ENCODE measurements at regions of chr15 and their contacts with region 1.

Region 1: DNA sequence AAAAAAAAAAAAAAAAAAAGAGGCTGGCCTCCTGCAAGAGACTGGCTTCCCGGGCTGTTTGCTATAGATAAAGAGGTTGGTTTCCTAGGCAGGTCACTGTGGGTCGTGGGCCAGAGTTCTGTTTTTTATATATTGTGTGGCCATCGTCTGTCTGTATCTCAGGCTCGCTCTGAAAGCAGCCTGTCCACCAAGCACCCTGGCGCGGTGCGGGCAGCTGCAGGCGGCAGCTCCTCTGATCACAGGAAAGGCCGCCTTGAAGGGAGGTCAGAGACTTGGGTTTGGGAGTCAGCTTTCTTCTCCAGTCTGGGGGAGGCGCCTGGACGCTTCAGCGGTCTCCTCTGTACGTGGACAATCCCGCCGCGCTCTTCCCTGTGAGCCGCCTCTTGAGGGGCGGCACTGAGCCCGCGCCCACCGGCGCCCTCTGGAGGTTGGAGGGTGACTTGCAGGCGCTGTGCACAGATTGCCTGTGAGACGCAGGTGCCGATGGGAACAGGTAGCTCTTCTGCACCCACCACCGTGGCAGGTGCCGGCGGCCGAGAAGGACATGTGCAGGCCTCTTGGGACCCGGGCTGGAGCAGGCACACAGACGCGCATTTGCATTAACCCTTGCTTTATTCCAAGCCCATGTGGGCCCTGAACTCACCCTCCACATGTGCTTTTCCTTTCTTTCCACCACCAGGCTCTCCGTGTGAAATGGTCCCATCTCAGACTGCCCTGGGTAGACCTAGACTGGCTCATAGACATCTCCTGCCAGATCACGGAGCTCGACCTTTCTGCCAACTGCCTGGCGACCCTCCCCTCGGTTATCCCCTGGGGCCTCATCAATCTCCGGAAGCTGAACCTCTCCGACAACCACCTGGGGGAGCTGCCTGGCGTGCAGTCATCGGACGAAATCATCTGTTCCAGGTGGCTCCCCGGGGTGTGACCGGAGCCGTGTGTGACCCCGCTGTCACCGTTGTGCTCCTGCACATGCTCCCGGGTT is 89.3 kb downstream of the LRRK1 start:
- DNase-seq: peak; percentile 66
- ATAC-seq: peak; percentile 95
- H3K4me3 ChIP-seq: peak overlapping the region; percentile 33; the same call in 1 of the 2 replicates
- H3K27ac ChIP-seq: peak overlapping the region; percentile 41; the same call in 1 of the 2 replicates
- H3K4me1 ChIP-seq: no peaks in the 10 kb centered on the region
- H3K27me3 ChIP-seq: no peaks in the 10 kb centered on the region
- CTCF ChIP-seq: peak; percentile 77
- POLR2A ChIP-seq: no peak
- RAD21 ChIP-seq: peak; percentile 53

Region 2: DNA sequence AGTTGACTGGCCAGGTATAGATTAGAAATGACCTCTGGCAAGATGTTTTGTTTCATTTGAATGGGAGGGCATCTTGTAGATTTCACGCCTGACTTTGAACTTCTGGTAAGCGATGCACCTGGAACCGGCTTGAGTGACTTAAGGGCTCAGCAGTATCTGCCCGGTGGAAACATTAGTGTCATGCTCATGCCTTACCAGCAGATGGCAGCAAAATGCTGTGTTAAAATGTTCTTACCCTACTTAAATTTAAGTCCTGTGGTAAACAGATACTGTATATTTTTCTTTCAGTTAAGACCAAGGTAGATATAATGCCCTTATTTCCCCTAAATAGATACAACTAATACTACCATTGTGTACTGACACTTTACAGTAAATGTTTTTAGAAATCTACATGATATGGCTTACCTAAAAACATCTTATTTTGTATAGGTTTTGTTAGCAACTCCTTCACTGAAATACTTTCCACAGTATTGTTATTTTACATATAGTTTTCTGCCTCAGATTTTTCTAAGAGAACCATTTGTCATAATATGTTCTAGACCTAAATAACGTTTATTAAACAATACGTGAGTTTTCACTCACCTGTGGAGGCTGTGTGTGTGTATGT is 380.6 kb before region 1 on chr15:
- CTCF ChIA-PET with region 1: interaction called, 4 read pairs
- POLR2A ChIA-PET with region 1: no interaction called
- dilution Hi-C with region 1: loop called (anchors 25 kb)
- in situ Hi-C with region 1: no loop called
- intact Hi-C with region 1: loop called (anchors 1 kb)
- DNase-seq: peak; percentile 82
- ATAC-seq: peak; percentile 98
- H3K4me3 ChIP-seq: no peak overlapping the region
- H3K27ac ChIP-seq: no peak overlapping the region
- H3K4me1 ChIP-seq: no peaks in the 10 kb centered on the region
- H3K27me3 ChIP-seq: no peaks in the 10 kb centered on the region
- CTCF ChIP-seq: peak; percentile 86
- POLR2A ChIP-seq: 0 out of 2 replicates have a peak, but pooled peaks have one; percentile 23
- RAD21 ChIP-seq: peak; percentile 86

Region 3: GRCh38 chr15:100635406-100636071 is 372.9 kb before region 1 on chr15:
- CTCF ChIA-PET with region 1: interaction called, 3 read pairs
- POLR2A ChIA-PET with region 1: no interaction called
- dilution Hi-C with region 1: loop called (anchors 25 kb)
- in situ Hi-C with region 1: loop called (anchors 5 kb)
- intact Hi-C with region 1: no loop called
- DNase-seq: no peak
- ATAC-seq: no peak
- H3K4me3 ChIP-seq: no peak overlapping the region
- H3K27ac ChIP-seq: no peak overlapping the region
- H3K4me1 ChIP-seq: no peaks in the 10 kb centered on the region; the same call in 1 of the 2 replicates
- H3K27me3 ChIP-seq: no peaks in the 10 kb centered on the region
- CTCF ChIP-seq: no peak
- POLR2A ChIP-seq: no peak
- RAD21 ChIP-seq: no peak

Region 4: GRCh38 chr15:100671858-100672543 is 336.4 kb before region 1 on chr15:
- CTCF ChIA-PET with region 1: interaction called, 3 read pairs
- POLR2A ChIA-PET with region 1: no interaction called
- dilution Hi-C with region 1: no loop called
- in situ Hi-C with region 1: no loop called
- intact Hi-C with region 1: loop called (anchors 1 kb)
- DNase-seq: peak; percentile 53
- ATAC-seq: peak; percentile 78
- H3K4me3 ChIP-seq: no peak overlapping the region
- H3K27ac ChIP-seq: peak overlapping the region; percentile 23
- H3K4me1 ChIP-seq: peaks cover 4% of the 10 kb centered on the region; the same call in 1 of the 2 replicates
- H3K27me3 ChIP-seq: no peaks in the 10 kb centered on the region
- CTCF ChIP-seq: peak; percentile 75
- POLR2A ChIP-seq: 0 out of 2 replicates have a peak, but pooled peaks have one; percentile 26
- RAD21 ChIP-seq: peak; percentile 84

Region 5: DNA sequence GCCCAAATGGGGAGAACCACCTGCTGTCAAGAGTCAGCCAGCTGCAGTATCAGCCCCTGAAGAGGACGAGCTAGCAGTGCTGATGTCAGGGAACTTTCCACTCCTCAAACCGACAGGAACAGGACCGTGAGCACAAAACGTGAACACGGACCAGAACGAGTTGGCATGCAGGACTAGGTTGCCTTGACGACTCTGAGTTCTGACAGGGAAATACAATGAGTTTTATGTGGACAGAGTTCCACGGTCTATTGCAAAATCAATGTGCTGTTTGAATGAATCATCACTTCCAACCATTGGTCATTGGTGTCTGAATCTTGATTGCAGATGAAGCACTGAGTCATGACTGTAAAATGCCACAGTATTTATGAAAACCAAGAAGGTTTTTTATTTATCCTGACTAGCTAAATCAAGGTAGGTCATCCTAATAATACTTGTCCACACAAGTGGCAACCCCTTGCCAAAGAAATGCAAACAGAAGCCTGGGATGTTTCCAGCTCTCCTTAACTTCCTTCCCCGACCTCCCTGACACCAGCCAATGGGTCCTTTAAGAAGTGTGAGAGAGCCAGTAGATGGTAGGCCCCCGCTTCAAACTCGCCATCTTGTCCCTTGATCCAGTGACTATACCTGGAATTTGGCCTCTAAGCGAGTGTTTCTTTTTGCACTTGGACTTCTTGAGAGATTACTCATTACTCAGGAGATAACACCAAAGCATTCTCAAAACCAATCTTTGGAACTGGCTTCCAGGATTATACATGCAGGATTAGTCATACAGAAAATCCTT is 286.5 kb before region 1 on chr15:
- CTCF ChIA-PET with region 1: no interaction called
- POLR2A ChIA-PET with region 1: no interaction called
- dilution Hi-C with region 1: no loop called
- in situ Hi-C with region 1: no loop called
- intact Hi-C with region 1: loop called (anchors 5 kb)
- DNase-seq: peak; percentile 100
- ATAC-seq: peak; percentile 59
- H3K4me3 ChIP-seq: no peak overlapping the region
- H3K27ac ChIP-seq: peak overlapping the region; percentile 68
- H3K4me1 ChIP-seq: peaks cover 38% of the 10 kb centered on the region
- H3K27me3 ChIP-seq: no peaks in the 10 kb centered on the region
- CTCF ChIP-seq: no peak
- POLR2A ChIP-seq: no peak
- RAD21 ChIP-seq: 0 out of 2 replicates have a peak, but pooled peaks have one; percentile 23

Region 6: DNA sequence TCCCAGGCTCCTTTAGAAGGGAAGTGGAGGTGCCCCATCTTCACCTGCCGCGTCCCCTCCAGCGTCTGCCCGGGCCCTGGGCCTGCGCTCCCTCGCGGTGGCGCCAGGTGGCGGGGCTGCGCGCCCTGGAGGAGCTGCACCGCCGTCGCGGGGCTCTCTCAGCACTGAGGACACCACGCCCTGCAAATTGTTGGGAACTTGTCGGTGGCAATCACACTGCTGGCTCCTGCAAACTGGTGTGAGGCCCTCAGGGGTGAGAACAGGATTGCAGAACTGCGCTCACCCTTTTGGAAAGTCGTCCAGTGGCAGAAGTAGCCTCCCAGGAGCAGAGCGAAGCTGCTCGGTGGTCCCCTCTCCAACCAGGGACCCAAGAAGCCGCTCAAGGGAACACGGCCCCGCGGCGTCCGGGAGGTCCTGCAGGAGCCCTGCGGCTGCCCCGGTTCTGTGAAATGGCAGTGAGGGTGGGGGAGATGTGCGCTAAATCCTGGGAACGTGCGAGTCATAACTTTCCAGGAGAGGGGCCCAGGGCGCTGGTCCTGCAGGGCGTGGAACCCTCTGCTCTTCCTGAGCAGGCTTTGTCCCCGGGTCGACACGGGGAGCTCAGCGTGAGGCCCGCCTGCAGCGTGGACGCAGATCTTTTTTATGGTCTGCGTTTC is 90.3 kb before region 1 on chr15:
- CTCF ChIA-PET with region 1: interaction called, 44 read pairs
- POLR2A ChIA-PET with region 1: interaction called, 4 read pairs
- dilution Hi-C with region 1: no loop called
- in situ Hi-C with region 1: loop called (anchors 5 kb)
- intact Hi-C with region 1: loop called (anchors 1 kb)
- DNase-seq: peak; percentile 62
- ATAC-seq: peak; percentile 83
- H3K4me3 ChIP-seq: peak overlapping the region; percentile 60
- H3K27ac ChIP-seq: no peak overlapping the region; the same call in 1 of the 2 replicates
- H3K4me1 ChIP-seq: no peaks in the 10 kb centered on the region; the same call in 1 of the 2 replicates
- H3K27me3 ChIP-seq: no peaks in the 10 kb centered on the region
- CTCF ChIP-seq: peak; percentile 90
- POLR2A ChIP-seq: no peak
- RAD21 ChIP-seq: peak; percentile 85

Measured in IMR-90 (cell line).